Naive thymus-derived CD4-positive, alpha-beta T cell (primary cell): ENCODE measurements at regions of chr16 and their contacts with region 1.

Region 1: GRCh38 chr16:79081297-79082066 is 519.1 kb downstream of the MAF start:
- DNase-seq: no peak
- ATAC-seq: no peak
- H3K4me3 ChIP-seq: no peak overlapping the region
- H3K4me3 Mint-ChIP-seq: no peak overlapping the region
- H3K27ac ChIP-seq: no peak overlapping the region
- H3K27ac Mint-ChIP-seq: no peak overlapping the region
- H3K4me1 ChIP-seq: no peaks in the 10 kb centered on the region
- H3K4me1 Mint-ChIP-seq: peaks cover 7 to 51% (median 16%) of the 10 kb centered on the region in 7 donors
- H3K27me3 ChIP-seq: no peaks in the 10 kb centered on the region
- H3K27me3 Mint-ChIP-seq: peaks cover 0 to 3% (median 0%) of the 10 kb centered on the region in 5 donors

Region 2: GRCh38 chr16:78866521-78866920 is 215.0 kb before region 1 on chr16:
- CTCF ChIA-PET with region 1: no interaction called
- POLR2A ChIA-PET with region 1: no interaction called
- intact Hi-C with region 1: no loop called
- DNase-seq: no peak
- ATAC-seq: no peak
- H3K4me3 ChIP-seq: no peak overlapping the region
- H3K4me3 Mint-ChIP-seq: no peak overlapping the region
- H3K27ac ChIP-seq: no peak overlapping the region
- H3K27ac Mint-ChIP-seq: no peak overlapping the region
- H3K4me1 ChIP-seq: no peaks in the 10 kb centered on the region
- H3K4me1 Mint-ChIP-seq: no peaks in the 10 kb centered on the region
- H3K27me3 ChIP-seq: no peaks in the 10 kb centered on the region
- H3K27me3 Mint-ChIP-seq: no peaks in the 10 kb centered on the region

Region 3: GRCh38 chr16:79071424-79071823 is 10.1 kb before region 1 on chr16:
- CTCF ChIA-PET with region 1: no interaction called
- POLR2A ChIA-PET with region 1: no interaction called
- intact Hi-C with region 1: loop called in 1 of 2 experiments (anchors 1 kb)
- DNase-seq: no peak
- ATAC-seq: no peak
- H3K4me3 ChIP-seq: no peak overlapping the region
- H3K4me3 Mint-ChIP-seq: no peak overlapping the region
- H3K27ac ChIP-seq: no peak overlapping the region
- H3K27ac Mint-ChIP-seq: no peak overlapping the region
- H3K4me1 ChIP-seq: no peaks in the 10 kb centered on the region
- H3K4me1 Mint-ChIP-seq: peaks cover 14 to 53% (median 44%) of the 10 kb centered on the region in 7 donors
- H3K27me3 ChIP-seq: no peaks in the 10 kb centered on the region
- H3K27me3 Mint-ChIP-seq: peaks cover 0 to 11% (median 1%) of the 10 kb centered on the region in 5 donors